ENCODE measurements at regions of chr7 and their contacts with region 1.

Region 1: DNA sequence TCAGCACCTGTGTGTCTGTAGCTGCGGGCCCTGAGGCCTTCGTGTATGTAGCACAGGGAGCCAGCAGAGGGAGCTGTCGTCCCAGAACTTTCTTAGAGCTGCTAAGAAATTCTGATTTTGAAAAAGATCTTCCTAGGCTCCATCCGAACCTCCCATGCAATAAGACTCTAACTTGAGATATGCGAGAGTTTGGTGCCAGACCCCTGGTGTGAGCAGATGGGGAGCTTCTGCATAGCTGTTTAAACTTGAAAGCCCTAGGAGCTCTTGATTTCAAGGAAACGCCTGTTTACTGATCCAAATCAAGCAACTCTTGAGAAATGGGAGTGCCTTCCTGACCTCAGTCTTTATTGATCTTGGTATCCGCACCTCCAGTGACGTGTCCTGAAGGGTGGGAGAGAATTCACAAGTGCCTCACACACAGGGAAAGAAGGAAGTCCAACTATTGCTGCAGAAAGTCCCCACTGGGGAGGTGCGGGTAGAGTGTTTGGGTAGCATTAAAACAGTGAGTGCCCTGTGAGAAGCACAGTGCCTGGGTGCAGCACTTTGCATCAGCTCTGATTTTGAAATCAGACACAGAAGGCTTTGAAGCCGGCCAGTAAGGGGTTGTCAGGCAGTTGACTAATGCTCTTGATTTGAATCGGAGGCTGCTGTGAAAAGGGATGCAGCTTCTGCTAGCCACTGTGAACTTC is 66.4 kb upstream of the STRIP2 start:
- DNase-seq: peak; percentile 60 to 84
- H3K4me3 ChIP-seq: no peak overlapping the region
- H3K4me1 ChIP-seq: peaks cover 10% of the 10 kb centered on the region
- H3K27me3 ChIP-seq: no peaks in the 10 kb centered on the region

Region 2: DNA sequence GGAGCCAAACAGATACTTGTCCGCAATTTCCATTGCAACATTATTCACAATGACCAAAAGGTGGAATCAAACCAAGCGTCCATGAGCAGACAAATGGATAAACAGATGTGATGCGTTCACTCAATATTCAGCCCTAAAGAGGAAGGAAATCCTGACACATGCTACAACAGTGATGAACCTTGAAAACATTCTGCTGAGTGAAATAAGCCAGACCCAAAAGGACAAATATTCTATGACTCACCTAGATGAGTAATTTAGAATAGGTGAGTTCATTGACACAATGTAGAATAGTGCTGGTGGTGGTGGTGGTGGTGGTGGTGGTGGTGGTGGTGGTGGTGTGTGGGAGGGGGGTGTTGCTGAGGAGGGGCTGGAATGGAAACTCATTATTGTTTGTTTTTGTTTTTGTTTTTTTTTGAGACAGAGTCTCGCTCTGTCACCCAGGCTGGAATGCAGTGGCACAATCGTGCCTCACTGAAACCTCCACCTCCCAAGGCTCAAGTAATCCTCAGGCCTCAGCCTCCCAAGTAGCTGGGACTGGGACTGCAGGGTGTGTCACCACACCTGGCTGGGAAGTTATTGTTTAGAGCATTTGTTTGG is 163.0 kb after region 1 on chr7:
- in situ Hi-C with region 1: no loop called
- DNase-seq: no peak
- H3K4me3 ChIP-seq: no peak overlapping the region
- H3K4me1 ChIP-seq: no peaks in the 10 kb centered on the region
- H3K27me3 ChIP-seq: no peaks in the 10 kb centered on the region

Region 3: GRCh38 chr7:129644634-129645230 is 276.9 kb after region 1 on chr7:
- in situ Hi-C with region 1: loop called (anchors 10 kb)
- DNase-seq: peak in 1 of 2 experiments; percentile 80
- H3K4me3 ChIP-seq: no peak overlapping the region
- H3K4me1 ChIP-seq: peaks cover 19% of the 10 kb centered on the region
- H3K27me3 ChIP-seq: no peaks in the 10 kb centered on the region

Measured in HAP-1 (cell line).